ENCODE measurements at regions of chr14 and their contacts with region 1.

Region 1: GRCh38 chr14:37874429-37875191 is 279.2 kb downstream of the TTC6 start:
- DNase-seq: peak; percentile 59 to 74
- ATAC-seq: peak; percentile 96 to 99
- H3K4me3 ChIP-seq: no peak overlapping the region
- H3K27ac ChIP-seq: no peak overlapping the region; a peak in 1 of 6 replicates
- H3K4me1 ChIP-seq: peaks cover 10% of the 10 kb centered on the region; the same call in 2 of the 3 replicates
- CTCF ChIP-seq: peak; percentile 86
- EP300 ChIP-seq: no peak
- POLR2A ChIP-seq: no peak
- RAD21 ChIP-seq: peak; percentile 91 to 94

Region 2: DNA sequence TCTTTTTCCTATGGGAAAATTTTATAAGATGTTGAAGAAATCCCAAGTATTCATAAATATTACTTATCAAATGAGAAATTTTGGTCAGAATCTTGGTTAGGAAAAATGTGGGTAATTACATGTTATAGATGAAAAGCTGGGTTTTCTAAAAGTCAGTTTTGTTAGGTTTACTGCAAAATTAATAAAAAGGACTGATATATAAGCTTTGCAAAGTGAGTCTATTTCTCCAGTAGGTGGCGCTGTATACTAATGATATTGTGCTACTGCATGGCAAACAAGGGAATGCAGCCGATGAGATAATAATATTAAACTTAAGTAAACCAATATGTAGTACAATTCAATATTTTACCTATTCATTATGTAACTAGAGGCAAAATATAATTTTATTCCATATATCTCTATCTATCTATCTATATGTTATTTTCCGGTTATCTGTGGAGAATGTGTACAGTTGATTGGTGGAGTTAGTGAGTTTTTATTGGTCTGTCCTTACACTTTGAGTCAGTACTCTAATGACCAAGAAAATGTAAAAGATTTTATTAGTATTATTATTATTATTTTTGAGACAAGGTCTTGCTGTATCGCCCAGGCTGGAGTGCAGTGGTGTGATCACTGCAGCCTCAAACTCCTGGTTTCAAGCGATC is 643.9 kb before region 1 on chr14:
- CTCF ChIA-PET with region 1: interaction called, 14 read pairs
- POLR2A ChIA-PET with region 1: no interaction called
- DNase-seq: peak; percentile 35 to 70
- ATAC-seq: peak; percentile 73 to 85; a peak in 5 of 6 replicates
- H3K4me3 ChIP-seq: no peak overlapping the region
- H3K27ac ChIP-seq: no peak overlapping the region
- H3K4me1 ChIP-seq: 0 out of 3 replicates have a peak, but pooled peaks cover 3% of the 10 kb centered on the region
- CTCF ChIP-seq: peak; percentile 82
- EP300 ChIP-seq: no peak
- POLR2A ChIP-seq: no peak
- RAD21 ChIP-seq: peak; percentile 55 to 57

Region 3: GRCh38 chr14:37246427-37246914 is 628.1 kb before region 1 on chr14:
- CTCF ChIA-PET with region 1: interaction called, 20 read pairs
- POLR2A ChIA-PET with region 1: no interaction called
- DNase-seq: peak; percentile 25 to 61
- ATAC-seq: peak in 1 of 2 experiments; percentile 62; a peak in 4 of 6 replicates
- H3K4me3 ChIP-seq: no peak overlapping the region
- H3K27ac ChIP-seq: no peak overlapping the region
- H3K4me1 ChIP-seq: no peaks in the 10 kb centered on the region; the same call in 2 of the 3 replicates
- CTCF ChIP-seq: peak; percentile 87
- EP300 ChIP-seq: no peak
- POLR2A ChIP-seq: no peak
- RAD21 ChIP-seq: peak; percentile 81 to 83

Region 4: GRCh38 chr14:37709419-37710195 is 165.0 kb before region 1 on chr14:
- CTCF ChIA-PET with region 1: interaction called, 45 read pairs
- POLR2A ChIA-PET with region 1: no interaction called
- DNase-seq: peak in 1 of 2 experiments; percentile 23
- ATAC-seq: no peak
- H3K4me3 ChIP-seq: no peak overlapping the region
- H3K27ac ChIP-seq: no peak overlapping the region
- H3K4me1 ChIP-seq: no peaks in the 10 kb centered on the region
- CTCF ChIP-seq: peak; percentile 55
- EP300 ChIP-seq: no peak
- POLR2A ChIP-seq: no peak
- RAD21 ChIP-seq: peak; percentile 66 to 67; a peak in 4 of 5 replicates

Region 5: DNA sequence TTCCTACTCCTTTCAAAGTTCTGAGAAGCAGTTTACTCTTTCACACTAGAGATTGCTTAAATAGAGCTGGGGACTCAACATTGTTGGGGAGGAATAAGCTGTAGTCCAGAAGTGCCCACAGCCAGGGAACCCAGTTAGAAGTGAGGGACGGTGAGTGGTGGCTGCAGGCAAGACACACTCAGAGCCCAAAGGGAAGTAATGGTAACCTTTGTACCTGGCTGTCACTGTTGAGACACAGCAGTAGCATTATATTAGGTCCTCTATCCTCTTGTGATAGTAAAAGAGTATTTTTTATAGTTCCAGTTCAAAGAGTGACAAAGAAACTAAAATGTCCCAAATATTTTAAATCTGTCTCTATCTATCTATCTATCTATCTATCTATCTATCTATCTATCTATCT is 15.9 kb before region 1 on chr14:
- CTCF ChIA-PET with region 1: interaction called, 17 read pairs
- POLR2A ChIA-PET with region 1: no interaction called
- DNase-seq: no peak
- ATAC-seq: no peak
- H3K4me3 ChIP-seq: no peak overlapping the region
- H3K27ac ChIP-seq: no peak overlapping the region
- H3K4me1 ChIP-seq: no peaks in the 10 kb centered on the region
- CTCF ChIP-seq: no peak
- EP300 ChIP-seq: no peak
- POLR2A ChIP-seq: no peak
- RAD21 ChIP-seq: no peak

Region 6: DNA sequence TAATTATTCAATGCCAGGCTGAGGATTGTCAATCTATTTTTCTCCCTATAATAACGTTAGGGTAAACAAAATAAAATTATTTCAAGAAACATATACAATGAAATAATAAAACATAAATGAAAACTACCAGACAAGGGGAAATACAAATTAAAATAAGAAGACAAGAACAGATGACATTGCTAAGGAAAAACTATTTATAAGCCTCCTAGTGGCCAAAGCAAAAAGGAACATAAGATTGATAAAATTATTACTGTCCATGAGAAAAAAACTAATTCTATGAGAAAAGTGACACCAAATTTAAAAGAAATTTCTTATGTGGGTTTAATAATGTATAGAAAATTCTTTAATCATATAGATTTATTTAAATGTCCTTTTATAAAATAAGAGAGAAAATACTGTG is 15.5 kb after region 1 on chr14:
- CTCF ChIA-PET with region 1: interaction called, 18 read pairs
- POLR2A ChIA-PET with region 1: no interaction called
- DNase-seq: no peak
- ATAC-seq: no peak
- H3K4me3 ChIP-seq: no peak overlapping the region
- H3K27ac ChIP-seq: no peak overlapping the region
- H3K4me1 ChIP-seq: no peaks in the 10 kb centered on the region
- CTCF ChIP-seq: 0 out of 3 replicates have a peak, but pooled peaks have one; percentile 5
- EP300 ChIP-seq: no peak
- POLR2A ChIP-seq: no peak
- RAD21 ChIP-seq: no peak